ENCODE measurements at regions of chr2 and their contacts with region 1.

Region 1: DNA sequence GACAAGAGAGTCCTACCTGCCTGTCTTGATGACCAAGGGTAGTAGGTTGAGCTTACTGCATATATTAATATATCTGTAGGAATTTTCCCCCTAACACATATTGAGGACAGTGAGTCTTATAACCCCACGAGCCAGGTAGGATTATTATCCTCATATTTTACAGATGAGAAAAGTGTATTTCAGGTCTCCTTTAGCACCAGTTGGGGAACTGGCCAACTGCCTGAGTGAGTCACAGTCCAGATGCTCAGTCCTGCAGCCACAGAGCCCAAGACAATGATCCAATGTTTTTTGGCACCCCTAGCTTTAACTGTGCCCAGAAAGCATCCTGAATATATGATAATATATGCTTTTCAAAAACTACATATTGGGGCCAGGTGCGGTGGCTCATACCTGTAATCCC is 30.8 kb upstream of the GLS start:
- DNase-seq: no peak
- H3K4me3 ChIP-seq: no peak overlapping the region
- H3K27ac ChIP-seq: no peak overlapping the region
- H3K27me3 ChIP-seq: no peaks in the 10 kb centered on the region
- CTCF ChIP-seq: no peak

Region 2: DNA sequence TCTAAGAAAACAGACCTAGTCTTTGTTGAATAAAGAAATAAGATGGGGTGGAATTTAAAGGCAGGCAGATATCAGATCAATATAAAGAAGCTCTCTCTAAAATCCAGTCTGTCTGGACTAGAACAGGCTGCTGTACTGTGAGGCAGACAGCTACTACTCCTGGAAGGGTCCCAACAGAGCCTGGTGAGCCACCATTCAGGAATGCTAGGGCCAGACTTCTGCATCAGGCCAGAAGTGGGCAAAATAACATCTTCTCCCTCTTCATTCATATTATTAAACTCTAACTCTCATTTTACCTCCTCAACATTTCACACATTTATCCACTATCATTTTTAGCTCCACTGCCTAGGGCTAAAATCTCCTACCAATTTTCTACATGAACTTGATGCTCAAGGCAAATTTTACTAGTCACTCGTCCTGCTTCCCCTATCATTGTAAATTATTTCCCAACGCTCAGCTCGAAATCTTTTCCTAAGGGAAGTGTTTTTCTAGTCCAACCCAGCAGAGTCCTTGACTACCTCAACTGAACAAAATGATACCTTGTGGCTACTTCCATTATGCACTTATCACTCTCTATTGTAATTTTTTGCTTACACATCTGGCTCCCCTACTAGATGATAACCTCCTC is 14.4 kb before region 1 on chr2:
- CTCF ChIA-PET with region 1: interaction called, 26 read pairs
- POLR2A ChIA-PET with region 1: interaction called, 4 read pairs
- DNase-seq: peak; percentile 77
- H3K4me3 ChIP-seq: no peak overlapping the region
- H3K27ac ChIP-seq: no peak overlapping the region
- H3K27me3 ChIP-seq: no peaks in the 10 kb centered on the region
- CTCF ChIP-seq: no peak

Region 3: DNA sequence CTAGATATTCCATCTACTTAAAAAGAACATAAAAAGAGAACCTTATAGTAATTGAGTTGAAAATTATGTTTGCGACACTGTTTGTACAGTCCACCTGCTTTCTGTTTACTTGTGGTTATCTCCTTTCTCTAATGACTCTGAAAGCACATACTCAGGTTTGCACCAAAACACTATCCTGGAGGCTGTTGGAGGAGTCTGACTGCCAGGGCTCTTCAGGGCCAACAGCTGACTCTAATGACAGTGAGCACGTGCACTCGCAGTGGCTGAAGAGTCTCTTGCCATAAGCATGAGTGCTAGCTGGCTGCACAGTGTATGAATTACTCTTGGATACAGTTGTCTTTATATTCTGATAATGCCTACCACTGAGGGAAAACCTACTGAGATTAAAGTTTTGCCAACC is 14.2 kb after region 1 on chr2:
- CTCF ChIA-PET with region 1: interaction called, 37 read pairs
- POLR2A ChIA-PET with region 1: interaction called, 5 read pairs
- DNase-seq: no peak
- H3K4me3 ChIP-seq: no peak overlapping the region
- H3K27ac ChIP-seq: peak overlapping the region; percentile 62
- H3K27me3 ChIP-seq: no peaks in the 10 kb centered on the region
- CTCF ChIP-seq: no peak

Region 4: GRCh38 chr2:190887089-190887488 is 37.3 kb after region 1 on chr2:
- CTCF ChIA-PET with region 1: interaction called, 25 read pairs
- POLR2A ChIA-PET with region 1: interaction called, 14 read pairs
- DNase-seq: no peak
- H3K4me3 ChIP-seq: no peak overlapping the region
- H3K27ac ChIP-seq: no peak overlapping the region
- H3K27me3 ChIP-seq: no peaks in the 10 kb centered on the region
- CTCF ChIP-seq: no peak

Region 5: DNA sequence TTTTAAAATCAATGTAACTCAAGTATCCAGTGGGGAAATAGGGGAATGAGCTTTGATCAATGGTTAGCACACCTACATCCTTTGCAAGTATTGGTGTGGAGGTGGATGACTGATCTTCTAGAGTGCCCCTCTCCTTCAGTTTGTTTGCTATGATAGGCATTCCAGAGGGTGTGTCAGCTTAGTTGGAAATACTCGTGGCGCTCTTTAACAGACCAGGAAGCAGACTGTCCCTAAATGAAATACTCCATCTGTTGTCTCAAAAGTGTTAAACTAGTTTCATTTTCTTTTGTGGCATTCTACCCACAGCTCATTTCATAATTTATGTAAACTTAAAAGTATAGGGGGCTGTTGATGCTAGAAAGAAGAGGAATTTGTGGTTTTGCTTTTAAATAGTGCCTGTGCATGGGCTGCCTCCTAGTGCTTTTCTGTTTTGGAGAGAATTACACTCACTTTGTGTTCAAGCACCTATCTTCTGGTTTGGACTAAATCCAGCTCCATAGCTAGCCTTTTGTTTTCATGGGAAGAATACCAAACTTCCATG is 98.0 kb after region 1 on chr2:
- CTCF ChIA-PET with region 1: interaction called, 11 read pairs
- POLR2A ChIA-PET with region 1: no interaction called
- DNase-seq: peak; percentile 59
- H3K4me3 ChIP-seq: peak overlapping the region; percentile 11; the same call in 1 of the 2 replicates
- H3K27ac ChIP-seq: peak overlapping the region; percentile 47
- H3K27me3 ChIP-seq: no peaks in the 10 kb centered on the region
- CTCF ChIP-seq: peak; percentile 28